ENCODE measurements at regions of chr4 and their contacts with region 1.

Region 1: DNA sequence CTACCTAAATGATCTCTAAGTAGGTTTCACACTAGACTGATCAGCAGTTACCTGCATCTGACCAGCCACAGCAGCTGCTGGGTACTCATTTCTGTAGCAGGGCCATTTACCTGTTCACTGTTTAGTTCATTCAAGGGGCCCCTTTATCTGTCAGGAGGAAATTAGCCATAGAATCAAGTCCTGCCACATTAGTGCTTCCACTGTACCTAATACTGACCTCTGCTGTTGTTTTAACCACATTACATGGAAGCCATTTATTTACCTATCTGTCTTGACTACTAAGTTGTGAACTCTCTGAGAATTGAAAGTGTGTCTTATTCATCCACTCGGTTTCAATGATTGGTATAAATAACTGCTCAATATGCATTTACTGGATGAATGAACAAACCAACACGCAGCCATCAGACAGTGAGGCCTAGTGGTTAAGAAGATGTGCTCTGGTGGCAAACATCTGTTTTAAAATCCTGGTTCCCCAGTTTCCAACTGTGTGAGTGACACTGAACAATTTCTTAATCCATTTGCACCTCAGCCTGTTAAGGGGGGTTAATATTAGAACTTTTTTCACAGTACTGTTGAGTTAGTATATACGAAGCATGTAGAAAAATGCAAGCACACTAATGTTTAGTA is 30.0 kb upstream of the ANXA5 start:
- DNase-seq: no peak
- H3K4me3 ChIP-seq: no peak overlapping the region
- H3K27ac ChIP-seq: no peak overlapping the region
- H3K4me1 ChIP-seq: no peaks in the 10 kb centered on the region
- H3K27me3 ChIP-seq: no peaks in the 10 kb centered on the region
- CTCF ChIP-seq: peak; percentile 40 to 58 (median 45)
- EP300 ChIP-seq: no peak
- POLR2A ChIP-seq: no peak

Region 2: DNA sequence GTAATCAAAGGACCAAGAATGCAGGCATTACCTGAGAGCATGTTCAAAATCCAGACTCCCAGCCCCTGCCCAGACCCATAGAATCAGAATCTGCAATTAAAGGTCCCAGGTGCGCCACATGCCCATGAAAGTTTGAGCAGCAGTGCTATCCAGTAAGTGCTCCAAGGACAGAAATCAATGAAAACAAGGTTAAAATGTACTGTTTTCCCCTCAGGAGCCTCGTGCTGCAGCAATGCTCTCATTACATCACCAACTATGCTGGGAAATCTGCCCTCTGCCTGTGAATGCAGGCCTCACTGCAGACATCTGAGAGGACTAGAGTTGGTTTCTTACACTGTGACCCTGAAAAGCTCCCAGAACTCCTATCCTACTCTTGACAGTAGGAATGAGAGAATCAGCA is 51.0 kb before region 1 on chr4:
- intact Hi-C with region 1: loop called in 2 of 4 experiments (anchors 10 kb)
- DNase-seq: no peak
- H3K4me3 ChIP-seq: no peak overlapping the region
- H3K27ac ChIP-seq: no peak overlapping the region
- H3K4me1 ChIP-seq: peaks cover 2% of the 10 kb centered on the region
- H3K27me3 ChIP-seq: no peaks in the 10 kb centered on the region
- CTCF ChIP-seq: no peak
- EP300 ChIP-seq: no peak
- POLR2A ChIP-seq: no peak